ENCODE measurements at regions of chr3 and their contacts with region 1.

Region 1: DNA sequence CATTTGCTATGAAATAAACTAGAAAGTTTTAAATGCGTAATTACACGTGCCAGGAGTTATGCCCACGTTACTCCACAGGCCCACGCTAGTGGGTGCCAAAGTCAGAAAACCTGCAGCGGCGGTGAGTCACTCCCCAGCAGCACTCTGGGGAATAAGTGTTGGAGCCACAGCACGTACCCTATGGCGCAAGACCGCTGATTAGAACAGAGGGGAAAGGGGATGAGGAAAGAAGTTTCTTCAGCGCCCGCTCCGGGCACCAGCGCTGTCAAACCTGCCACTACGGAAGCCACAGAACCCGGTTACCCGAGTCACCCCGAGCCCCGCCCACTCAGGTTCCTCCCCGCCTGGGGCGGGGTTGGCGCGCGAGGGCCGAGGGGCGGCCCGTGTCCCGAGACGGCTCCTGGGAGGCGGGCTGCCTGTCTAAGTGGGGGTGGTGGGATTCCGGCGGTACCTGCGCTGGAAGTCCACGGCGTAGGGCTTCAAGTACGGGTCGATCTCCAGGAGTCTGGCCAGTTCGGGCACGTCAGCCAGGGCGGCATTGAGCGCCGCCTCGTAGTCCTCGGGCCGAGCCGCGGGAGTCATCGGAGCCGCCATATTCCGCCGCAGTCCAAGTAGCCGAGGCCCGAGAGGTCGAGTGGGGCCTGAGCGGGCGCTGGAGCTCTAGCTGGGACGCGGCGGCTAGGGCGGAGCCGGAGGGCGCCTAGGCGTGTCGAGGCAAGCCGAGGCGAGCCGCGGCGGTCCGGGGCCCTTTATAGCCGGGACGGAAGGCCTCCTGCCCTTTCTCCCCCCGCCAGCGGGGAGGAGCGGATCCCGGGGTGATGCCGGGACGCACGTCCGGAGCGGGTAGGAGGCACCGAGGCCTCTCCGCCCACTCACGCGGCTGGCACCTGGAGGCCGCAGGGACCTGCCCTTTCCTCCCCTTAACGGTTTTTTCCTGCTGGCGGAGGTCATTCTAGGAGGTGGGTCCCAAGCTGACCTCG is at the start of gene GBE1:
- DNase-seq: peak; percentile 96 to 98
- ATAC-seq: peak; percentile 87 to 90 (median 88)
- H3K4me3 ChIP-seq: peak within 1 kb of the TSS; percentile 64
- H3K27ac ChIP-seq: peak within 1 kb of the TSS; percentile 92
- H3K4me1 ChIP-seq: peaks cover 67% of the 10 kb centered on the region
- H3K27me3 ChIP-seq: no peaks in the 10 kb centered on the region
- CTCF ChIP-seq: peak; percentile 24
- total RNA-seq, gene GBE1: 99.7 to 261 (median 185) TPM

Region 2: DNA sequence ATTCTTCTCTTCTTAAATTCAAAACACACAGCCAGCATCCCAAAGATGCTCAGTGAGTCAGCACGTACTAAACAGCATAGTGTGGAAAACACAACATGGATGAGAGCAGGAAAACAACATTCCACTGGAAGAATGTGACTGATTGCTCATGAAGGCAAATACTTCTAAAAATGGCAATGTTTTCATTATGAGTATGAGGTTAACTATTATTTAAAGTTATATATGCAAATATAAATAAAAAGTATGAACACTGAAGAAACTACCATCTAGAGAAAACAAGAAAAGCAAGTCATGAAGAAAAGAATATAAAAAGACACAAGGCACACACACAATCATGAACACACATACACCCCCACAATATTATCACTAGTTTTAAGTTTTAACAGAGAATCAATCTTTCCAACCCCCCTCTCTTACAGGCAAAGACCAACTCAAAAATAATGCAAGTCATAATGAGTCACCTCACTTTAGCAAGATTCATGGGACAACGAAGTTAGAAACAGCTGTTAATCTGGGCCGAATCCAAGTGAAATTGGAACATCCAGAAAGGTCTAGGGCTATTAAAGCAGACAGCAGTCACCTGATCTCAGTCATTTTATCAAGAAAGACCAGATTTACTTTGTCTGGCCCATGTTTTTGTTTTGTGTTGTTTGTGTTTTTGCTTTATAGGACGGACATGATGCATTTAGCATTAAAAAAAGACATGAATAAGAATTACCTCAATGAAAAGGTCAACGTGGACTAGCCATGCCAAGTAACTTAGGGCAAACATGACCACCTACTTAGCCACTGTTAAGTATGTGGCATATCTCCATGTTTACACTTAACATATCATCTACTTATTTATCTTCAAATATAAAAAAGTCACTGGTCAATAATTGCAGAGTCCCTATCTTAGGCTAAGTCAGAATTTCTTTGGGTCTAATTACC is 17.9 kb before region 1 on chr3:
- intact Hi-C with region 1: loop called in 1 of 2 experiments (anchors 2 kb)
- DNase-seq: no peak
- ATAC-seq: peak; percentile 72 to 78 (median 76)
- H3K4me3 ChIP-seq: peak overlapping the region; percentile 56
- H3K27ac ChIP-seq: peak overlapping the region; percentile 89
- H3K4me1 ChIP-seq: peaks cover 63% of the 10 kb centered on the region
- H3K27me3 ChIP-seq: no peaks in the 10 kb centered on the region
- CTCF ChIP-seq: no peak

Region 3: GRCh38 chr3:81823882-81824395 is 62.7 kb after region 1 on chr3:
- intact Hi-C with region 1: loop called in 1 of 2 experiments (anchors 5 kb)
- DNase-seq: no peak
- ATAC-seq: peak; percentile 62 to 94 (median 87)
- H3K4me3 ChIP-seq: peak overlapping the region; percentile 17
- H3K27ac ChIP-seq: peak overlapping the region; percentile 68
- H3K4me1 ChIP-seq: peaks cover 9% of the 10 kb centered on the region
- H3K27me3 ChIP-seq: no peaks in the 10 kb centered on the region
- CTCF ChIP-seq: no peak

Measured in psoas muscle (tissue), 8 donors.